A673 (cell line): ENCODE measurements at regions of chr7 and their contacts with region 1.

Region 1: DNA sequence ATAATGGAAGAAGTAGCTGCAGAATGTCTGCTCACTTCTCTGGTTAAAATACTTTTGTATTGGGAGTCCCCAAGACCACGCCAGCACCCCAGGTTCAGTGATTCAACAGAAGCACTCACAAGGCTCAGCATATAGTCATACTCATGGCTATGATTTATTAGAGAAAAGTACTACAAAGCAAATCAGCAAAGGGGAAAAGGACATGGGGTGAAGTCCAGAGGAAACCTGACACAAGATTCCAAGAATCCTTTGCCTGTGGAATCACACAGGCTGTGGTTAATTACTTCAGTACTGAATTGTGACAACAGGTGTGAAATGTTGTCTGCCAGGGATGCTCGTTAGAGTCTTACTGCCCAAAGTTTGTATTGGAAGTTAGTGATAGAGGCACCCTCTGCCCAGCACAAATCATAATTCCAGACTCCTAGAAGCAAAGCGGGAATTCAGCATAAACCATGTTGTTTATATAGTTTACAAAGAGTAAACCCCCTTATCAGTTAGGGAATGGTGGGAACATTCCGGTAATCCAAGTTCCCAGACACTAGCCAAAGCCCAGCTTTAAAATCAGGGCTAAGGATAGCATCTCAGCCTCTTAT is 79.4 kb downstream of the HYCC1 start:
- DNase-seq: no peak
- H3K4me3 ChIP-seq: no peak overlapping the region
- H3K27ac ChIP-seq: no peak overlapping the region
- H3K4me1 ChIP-seq: no peaks in the 10 kb centered on the region
- H3K27me3 ChIP-seq: no peaks in the 10 kb centered on the region
- CTCF ChIP-seq: no peak

Region 2: GRCh38 chr7:22295402-22296264 is 638.9 kb before region 1 on chr7:
- CTCF ChIA-PET with region 1: no interaction called
- POLR2A ChIA-PET with region 1: no interaction called
- intact Hi-C with region 1: no loop called
- DNase-seq: peak; percentile 18
- H3K4me3 ChIP-seq: no peak overlapping the region
- H3K27ac ChIP-seq: no peak overlapping the region
- H3K4me1 ChIP-seq: peaks cover 5% of the 10 kb centered on the region
- H3K27me3 ChIP-seq: no peaks in the 10 kb centered on the region
- CTCF ChIP-seq: no peak

Region 3: GRCh38 chr7:22980422-22980821 is 45.9 kb after region 1 on chr7:
- CTCF ChIA-PET with region 1: no interaction called
- POLR2A ChIA-PET with region 1: no interaction called
- intact Hi-C with region 1: loop called (anchors 5 kb)
- DNase-seq: no peak
- H3K4me3 ChIP-seq: no peak overlapping the region
- H3K27ac ChIP-seq: no peak overlapping the region
- H3K4me1 ChIP-seq: no peaks in the 10 kb centered on the region
- H3K27me3 ChIP-seq: no peaks in the 10 kb centered on the region
- CTCF ChIP-seq: no peak

Region 4: DNA sequence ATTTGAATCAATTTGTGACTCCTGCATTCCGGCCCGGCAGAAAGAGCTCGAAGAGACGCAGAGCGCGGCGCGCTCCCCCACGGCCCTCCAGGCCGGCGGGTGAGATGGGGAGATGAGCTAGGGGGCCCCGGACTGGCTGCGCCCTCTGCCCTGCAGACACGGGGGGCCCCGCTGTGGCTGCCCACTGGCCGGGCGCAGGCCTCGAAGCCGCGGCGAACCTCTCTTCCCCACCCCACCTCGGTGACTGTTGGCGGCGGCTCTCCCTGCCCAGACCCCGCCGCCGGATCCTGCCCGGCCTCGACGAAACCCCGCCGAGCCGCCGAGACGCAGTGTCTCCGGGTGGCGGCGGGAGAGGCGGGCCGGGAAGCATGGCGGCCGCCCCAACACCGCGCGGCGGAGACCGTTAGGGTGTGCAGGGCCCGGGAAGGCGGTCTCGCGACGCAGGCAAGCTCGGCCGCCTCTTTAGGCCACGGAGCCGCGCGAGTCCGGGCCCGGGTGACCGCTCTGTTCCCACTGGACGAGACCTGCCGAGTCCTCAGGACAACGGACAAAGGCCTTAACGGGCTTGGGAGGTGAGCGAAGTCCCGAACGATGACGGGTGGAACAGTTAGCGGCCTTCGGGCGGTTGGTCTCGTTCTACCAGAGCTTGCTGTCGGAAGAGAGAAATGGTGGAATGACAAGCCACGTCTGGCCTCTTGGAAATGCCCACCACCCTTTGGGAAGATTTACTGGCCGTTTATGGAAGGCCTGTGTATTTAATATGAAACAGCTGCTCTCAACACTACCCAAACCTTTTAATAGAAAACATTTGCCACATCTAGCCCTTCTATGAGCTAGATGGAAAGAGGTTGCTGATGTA is 271.6 kb after region 1 on chr7:
- CTCF ChIA-PET with region 1: no interaction called
- POLR2A ChIA-PET with region 1: no interaction called
- intact Hi-C with region 1: no loop called
- DNase-seq: no peak
- H3K4me3 ChIP-seq: no peak overlapping the region
- H3K27ac ChIP-seq: no peak overlapping the region
- H3K4me1 ChIP-seq: no peaks in the 10 kb centered on the region
- H3K27me3 ChIP-seq: no peaks in the 10 kb centered on the region
- CTCF ChIP-seq: no peak